Activated T-helper 1 cell treated with anti-CD3 and anti-CD28 coated beads, Interleukin-12 subunit alpha, Interleukin-12 subunit beta, Interleukin-2, Interleukin-4 antibody, amounts not matched to agents 30 ng/mL and 10 ng/mL and 1 ng/mL, durations not matched to agents 14 hours and 24 hours and 36 hours (primary cell): ENCODE measurements at regions of chr5 and their contacts with region 1.

Region 1: DNA sequence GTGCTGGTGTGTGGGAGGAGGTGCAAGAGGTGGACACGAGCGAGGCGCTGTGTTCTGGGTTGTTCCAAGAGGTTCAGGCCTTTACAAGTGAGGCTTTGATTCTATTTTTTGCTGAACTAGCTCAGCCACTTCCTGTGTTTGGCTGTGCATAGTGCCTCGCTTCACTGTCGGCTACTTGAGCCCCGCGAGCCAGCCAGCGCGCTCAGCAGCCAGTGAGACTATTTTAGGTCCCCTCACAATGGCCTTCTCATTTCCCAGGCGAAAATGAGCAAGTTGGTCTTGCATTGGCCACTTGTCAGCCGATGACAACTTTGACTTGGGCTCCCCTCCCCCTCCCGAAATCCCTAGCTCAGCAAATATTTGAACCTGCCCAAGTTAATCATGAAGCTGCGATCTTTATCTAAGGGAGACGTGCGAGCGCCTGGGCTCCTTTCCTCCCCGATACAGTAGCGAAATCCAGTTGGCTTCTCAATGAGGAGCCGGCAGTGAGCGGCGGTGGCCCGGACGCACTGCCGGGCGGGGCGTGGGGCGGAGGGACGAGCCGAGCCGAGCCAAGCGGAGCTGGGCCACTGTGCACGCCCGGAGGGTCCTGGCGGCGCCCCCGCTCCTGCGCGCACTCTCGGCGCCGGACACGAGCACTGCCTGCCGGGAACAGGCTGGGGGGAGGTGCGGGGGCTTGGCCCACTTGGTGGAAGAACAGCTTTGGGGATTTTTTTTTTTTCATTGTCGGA is 72.6 kb downstream of the PIK3R1 start:
- DNase-seq: peak; percentile 36
- H3K4me3 Mint-ChIP-seq: peak overlapping the region; percentile 88
- H3K27ac Mint-ChIP-seq: peak overlapping the region; percentile 81
- H3K4me1 Mint-ChIP-seq: peaks cover 85% of the 10 kb centered on the region
- H3K27me3 Mint-ChIP-seq: no peaks in the 10 kb centered on the region

Region 2: DNA sequence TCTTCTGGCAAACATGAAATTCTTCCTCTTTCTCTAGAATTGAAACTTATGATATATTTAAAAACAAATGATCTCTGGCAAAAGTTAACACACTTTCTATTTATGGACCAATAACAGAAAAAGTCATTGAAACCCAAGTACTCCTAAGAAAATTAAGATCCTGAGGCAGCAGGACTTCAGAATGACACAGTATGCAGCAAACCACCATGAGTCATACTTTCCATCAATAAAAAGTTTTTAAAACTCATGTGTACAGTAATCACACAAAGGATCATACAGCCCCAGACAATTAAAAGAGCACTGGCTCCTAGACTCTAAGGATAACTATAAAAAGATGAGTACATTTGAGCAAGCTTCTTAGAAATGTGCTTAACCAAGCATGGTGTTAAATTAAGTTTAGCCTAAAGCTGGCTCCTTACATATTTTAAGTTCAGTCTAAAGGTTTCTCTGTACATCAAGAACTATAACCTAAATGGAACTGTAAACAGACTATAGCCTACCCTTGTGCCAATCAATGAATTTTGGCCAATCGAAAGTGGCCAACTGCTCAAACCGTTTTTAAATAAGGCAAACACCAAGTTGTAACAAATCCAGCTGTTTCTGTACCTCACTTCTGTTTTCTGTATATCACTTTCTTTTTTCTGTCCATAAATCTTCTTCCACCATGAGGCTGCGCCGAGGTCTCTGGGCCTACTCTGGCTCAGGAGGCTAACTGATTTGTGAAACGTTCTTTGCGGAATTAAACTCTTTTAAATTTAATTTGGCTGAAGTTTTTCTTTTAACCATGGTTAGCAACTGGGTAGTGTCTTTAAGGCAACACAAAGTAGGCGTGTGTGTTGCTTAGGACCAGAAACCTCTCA is 304.7 kb before region 1 on chr5:
- intact Hi-C with region 1: no loop called
- DNase-seq: no peak
- H3K4me3 Mint-ChIP-seq: no peak overlapping the region
- H3K27ac Mint-ChIP-seq: no peak overlapping the region
- H3K4me1 Mint-ChIP-seq: peaks cover 6% of the 10 kb centered on the region
- H3K27me3 Mint-ChIP-seq: no peaks in the 10 kb centered on the region

Region 3: DNA sequence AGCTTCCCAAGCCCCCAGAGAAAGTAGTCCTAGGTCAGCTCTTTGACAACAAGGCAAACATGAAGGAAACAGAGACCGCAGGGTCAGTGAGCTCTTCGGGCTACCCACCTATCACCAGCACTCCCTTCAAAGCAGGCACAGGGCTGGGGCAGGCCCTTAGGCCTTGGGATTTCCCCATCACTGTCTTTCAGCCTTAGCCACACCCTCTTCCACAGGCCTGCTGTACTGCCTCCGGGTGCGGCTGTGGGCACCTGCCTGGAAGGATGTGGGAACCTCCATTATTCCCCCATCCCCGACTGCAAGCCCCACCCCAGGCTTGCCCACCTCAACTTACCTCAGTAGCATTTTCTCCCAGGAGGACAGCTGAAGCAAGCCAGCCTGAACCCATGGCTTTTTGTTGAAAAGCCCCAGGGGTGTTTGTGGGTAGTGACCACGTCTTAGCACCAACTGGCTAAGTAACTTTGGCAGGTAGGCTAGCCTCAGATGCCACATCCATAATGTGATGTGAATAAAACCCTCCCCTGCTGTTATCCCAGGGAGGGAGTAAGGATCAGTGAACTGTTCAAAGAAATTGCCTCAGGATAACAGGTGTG is 27.6 kb after region 1 on chr5:
- intact Hi-C with region 1: loop called (anchors 1 kb)
- DNase-seq: peak; percentile 39
- H3K4me3 Mint-ChIP-seq: no peak overlapping the region
- H3K27ac Mint-ChIP-seq: no peak overlapping the region
- H3K4me1 Mint-ChIP-seq: peaks cover 18% of the 10 kb centered on the region
- H3K27me3 Mint-ChIP-seq: peaks cover 20% of the 10 kb centered on the region

Region 4: GRCh38 chr5:68378204-68378824 is 90.2 kb after region 1 on chr5:
- intact Hi-C with region 1: loop called (anchors 5 kb)
- DNase-seq: no peak
- H3K4me3 Mint-ChIP-seq: no peak overlapping the region
- H3K27ac Mint-ChIP-seq: peak overlapping the region; percentile 14
- H3K4me1 Mint-ChIP-seq: peaks cover 58% of the 10 kb centered on the region
- H3K27me3 Mint-ChIP-seq: no peaks in the 10 kb centered on the region

Region 5: GRCh38 chr5:68460147-68460798 is 172.1 kb after region 1 on chr5:
- intact Hi-C with region 1: loop called (anchors 1 kb)
- DNase-seq: peak; percentile 11
- H3K4me3 Mint-ChIP-seq: no peak overlapping the region
- H3K27ac Mint-ChIP-seq: no peak overlapping the region
- H3K4me1 Mint-ChIP-seq: peaks cover 14% of the 10 kb centered on the region
- H3K27me3 Mint-ChIP-seq: peaks cover 6% of the 10 kb centered on the region

Region 6: DNA sequence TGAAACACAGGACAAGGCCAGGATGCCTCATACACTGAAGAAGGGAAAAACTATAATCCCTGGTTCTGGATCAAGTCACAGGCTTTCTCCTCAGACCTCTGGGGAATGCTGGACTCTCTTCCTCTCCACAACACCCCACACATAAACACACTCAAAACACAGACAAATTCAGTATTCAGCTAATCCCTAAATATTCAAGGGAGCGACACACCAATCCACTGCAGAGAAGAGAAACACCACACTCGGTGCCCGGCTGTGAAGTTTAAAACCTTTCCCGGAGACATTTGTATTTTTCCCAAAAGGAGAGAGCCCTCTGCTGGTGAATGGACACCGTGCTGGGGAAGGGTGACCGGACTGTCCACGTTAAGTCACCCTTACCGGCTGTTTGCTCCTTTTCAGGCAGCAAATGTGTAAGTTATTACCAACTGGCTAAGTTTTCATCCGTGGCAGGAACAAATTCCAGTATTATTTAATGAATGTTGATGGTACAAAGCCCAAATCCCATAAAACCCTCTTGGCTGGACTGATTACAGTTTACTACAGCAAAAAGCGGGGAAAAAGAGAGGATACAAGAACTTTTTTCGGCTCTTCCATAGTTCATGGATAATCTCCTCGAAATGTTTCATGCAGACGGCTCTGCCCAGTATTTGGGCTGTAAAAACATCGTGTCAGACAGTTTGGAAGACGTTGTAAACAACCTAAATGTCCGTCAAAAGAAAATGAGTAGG is 674.8 kb after region 1 on chr5:
- intact Hi-C with region 1: loop called (anchors 5 kb)
- DNase-seq: no peak
- H3K4me3 Mint-ChIP-seq: no peak overlapping the region
- H3K27ac Mint-ChIP-seq: no peak overlapping the region
- H3K4me1 Mint-ChIP-seq: peaks cover 8% of the 10 kb centered on the region
- H3K27me3 Mint-ChIP-seq: no peaks in the 10 kb centered on the region